Psoas muscle (tissue), 8 donors: ENCODE measurements at regions of chr11 and their contacts with region 1.

Region 1: GRCh38 chr11:11142430-11142829 is 210.6 kb downstream of the CSNK2A3 start:
- DNase-seq: no peak
- ATAC-seq: no peak
- H3K4me3 ChIP-seq: no peak overlapping the region
- H3K27ac ChIP-seq: no peak overlapping the region
- H3K4me1 ChIP-seq: peaks cover 18% of the 10 kb centered on the region
- H3K27me3 ChIP-seq: no peaks in the 10 kb centered on the region
- CTCF ChIP-seq: no peak

Region 2: DNA sequence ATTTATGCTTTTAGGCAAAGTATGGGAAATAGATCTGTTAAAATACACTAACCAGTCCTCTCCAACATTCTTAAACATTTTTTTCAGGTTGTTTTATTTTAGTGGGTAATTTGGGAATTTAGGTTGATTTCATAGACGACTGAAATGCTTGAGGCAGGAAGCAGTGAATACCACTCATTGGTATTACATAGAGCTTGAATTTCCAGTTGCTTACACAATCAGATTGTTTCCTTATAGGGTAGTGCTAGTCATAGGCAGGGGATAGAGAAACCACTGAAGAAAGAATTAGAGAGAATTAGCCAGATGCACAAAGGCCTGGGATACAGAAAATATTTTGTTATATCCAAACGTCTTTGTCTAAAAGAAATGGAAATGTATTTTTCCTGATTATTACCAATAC is 550.1 kb before region 1 on chr11:
- intact Hi-C with region 1: no loop called
- DNase-seq: no peak
- ATAC-seq: peak; percentile 84 to 86 (median 85)
- H3K4me3 ChIP-seq: no peak overlapping the region
- H3K27ac ChIP-seq: no peak overlapping the region
- H3K4me1 ChIP-seq: peaks cover 10% of the 10 kb centered on the region
- H3K27me3 ChIP-seq: no peaks in the 10 kb centered on the region
- CTCF ChIP-seq: no peak

Region 3: GRCh38 chr11:11078344-11079086 is 63.9 kb before region 1 on chr11:
- intact Hi-C with region 1: loop called in 1 of 2 experiments (anchors 5 kb)
- DNase-seq: no peak
- ATAC-seq: peak; percentile 47 to 57 (median 52)
- H3K4me3 ChIP-seq: no peak overlapping the region
- H3K27ac ChIP-seq: no peak overlapping the region
- H3K4me1 ChIP-seq: peaks cover 46% of the 10 kb centered on the region
- H3K27me3 ChIP-seq: no peaks in the 10 kb centered on the region
- CTCF ChIP-seq: no peak